Activated CD8-positive, alpha-beta T cell treated with anti-CD3 and anti-CD28 coated beads, Interleukin-2, amount 10 ng/mL, durations not matched to agents 7 days and 5 days (primary cell): ENCODE measurements at regions of chr15 and their contacts with region 1.

Region 1: GRCh38 chr15:90482124-90483011 is 47.4 kb upstream of the CRTC3 start:
- DNase-seq: peak; percentile 59
- ATAC-seq: no peak
- H3K4me3 Mint-ChIP-seq: no peak overlapping the region
- H3K27ac Mint-ChIP-seq: peak overlapping the region; percentile 22
- H3K4me1 Mint-ChIP-seq: peaks cover 38% of the 10 kb centered on the region
- H3K27me3 Mint-ChIP-seq: no peaks in the 10 kb centered on the region

Region 2: DNA sequence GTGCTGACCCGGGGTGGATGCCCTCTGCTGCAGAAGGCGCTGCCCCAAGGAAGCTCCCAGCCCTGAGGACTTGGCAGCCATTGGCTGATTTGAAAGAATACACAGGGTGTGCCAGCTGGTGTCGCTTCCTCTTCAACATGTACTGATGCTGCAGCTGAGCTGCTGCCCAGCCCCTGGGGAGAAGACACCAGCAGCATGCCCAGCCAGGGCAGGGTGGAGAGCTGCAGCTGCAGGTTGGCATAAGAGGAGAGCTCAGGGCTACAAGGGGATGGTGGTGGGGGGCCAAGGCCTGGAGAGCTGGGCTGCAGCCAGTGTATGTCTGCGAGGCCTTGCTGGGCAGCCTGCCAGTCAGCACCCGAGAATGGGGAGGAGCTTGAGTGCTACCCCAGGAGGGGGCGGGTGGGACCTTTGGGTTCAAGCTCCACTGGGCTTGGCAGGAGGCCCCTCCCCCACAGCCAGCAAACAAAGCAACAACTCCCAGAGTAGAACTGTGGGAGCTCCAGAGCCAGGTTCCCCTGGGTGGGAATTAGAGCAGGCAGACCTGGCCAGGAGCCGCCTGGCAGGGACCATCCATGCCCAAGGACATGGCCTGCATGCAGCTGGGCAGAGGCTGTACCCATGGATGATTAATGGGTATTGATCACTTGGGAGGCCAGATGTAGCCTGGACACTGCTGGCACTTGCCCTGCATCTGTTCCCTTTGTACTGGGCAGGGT is 290.4 kb before region 1 on chr15:
- CTCF ChIA-PET with region 1: no interaction called
- POLR2A ChIA-PET with region 1: no interaction called
- DNase-seq: peak; percentile 31
- ATAC-seq: peak; percentile 65
- H3K4me3 Mint-ChIP-seq: peak overlapping the region; percentile 60
- H3K27ac Mint-ChIP-seq: peak overlapping the region; percentile 78
- H3K4me1 Mint-ChIP-seq: peaks cover 34% of the 10 kb centered on the region
- H3K27me3 Mint-ChIP-seq: peaks cover 2% of the 10 kb centered on the region

Region 3: GRCh38 chr15:90291679-90292356 is 190.6 kb before region 1 on chr15:
- CTCF ChIA-PET with region 1: interaction called, 16 read pairs
- POLR2A ChIA-PET with region 1: no interaction called
- DNase-seq: peak; percentile 38
- ATAC-seq: no peak
- H3K4me3 Mint-ChIP-seq: no peak overlapping the region
- H3K27ac Mint-ChIP-seq: no peak overlapping the region
- H3K4me1 Mint-ChIP-seq: peaks cover 16% of the 10 kb centered on the region
- H3K27me3 Mint-ChIP-seq: peaks cover 6% of the 10 kb centered on the region

Region 4: GRCh38 chr15:90306560-90306959 is 175.8 kb before region 1 on chr15:
- CTCF ChIA-PET with region 1: interaction called, 27 read pairs
- POLR2A ChIA-PET with region 1: no interaction called
- DNase-seq: peak; percentile 60
- ATAC-seq: peak; percentile 84
- H3K4me3 Mint-ChIP-seq: peak overlapping the region; percentile 42
- H3K27ac Mint-ChIP-seq: peak overlapping the region; percentile 88
- H3K4me1 Mint-ChIP-seq: peaks cover 32% of the 10 kb centered on the region
- H3K27me3 Mint-ChIP-seq: peaks cover 4% of the 10 kb centered on the region

Region 5: DNA sequence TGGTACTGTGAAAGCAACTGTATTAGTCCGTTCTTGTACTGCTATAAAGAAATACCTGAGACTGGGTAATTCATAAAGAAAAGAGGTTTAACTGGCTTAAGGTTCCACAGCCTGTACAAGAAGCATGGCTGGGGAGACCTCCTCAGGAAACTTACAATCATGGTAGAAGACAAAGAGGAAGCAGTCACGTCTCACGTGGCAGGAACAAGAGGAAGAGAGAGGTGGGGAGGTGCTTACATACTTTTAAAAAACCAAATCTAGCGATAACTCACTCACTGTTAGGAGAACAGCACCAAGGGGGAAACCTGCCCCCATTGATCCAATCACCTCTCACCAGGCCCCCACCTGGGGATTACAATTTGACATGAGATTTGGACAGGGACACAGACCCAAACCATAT is 45.4 kb before region 1 on chr15:
- CTCF ChIA-PET with region 1: interaction called, 19 read pairs
- POLR2A ChIA-PET with region 1: no interaction called
- DNase-seq: no peak
- ATAC-seq: peak; percentile 30
- H3K4me3 Mint-ChIP-seq: no peak overlapping the region
- H3K27ac Mint-ChIP-seq: no peak overlapping the region
- H3K4me1 Mint-ChIP-seq: peaks cover 13% of the 10 kb centered on the region
- H3K27me3 Mint-ChIP-seq: no peaks in the 10 kb centered on the region

Region 6: DNA sequence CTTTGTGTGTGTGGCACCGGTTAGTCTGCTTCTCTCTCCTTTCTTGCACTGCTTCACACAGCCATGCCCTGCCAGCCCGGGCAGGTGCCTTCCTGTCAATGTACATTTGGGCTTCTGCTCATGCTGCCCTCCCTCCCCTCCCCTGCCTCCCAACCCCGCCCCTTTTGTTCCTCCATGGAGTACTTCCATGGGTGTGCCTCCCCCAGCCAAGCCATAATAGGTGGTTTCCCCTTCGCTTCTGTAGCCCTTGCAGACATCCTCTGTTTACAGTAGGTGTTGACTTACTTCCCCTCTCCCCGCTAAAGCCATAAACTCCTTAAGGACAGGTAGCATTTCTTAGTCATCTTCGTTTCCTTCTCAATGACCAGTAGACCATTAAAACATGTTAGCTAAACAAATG is 15.5 kb after region 1 on chr15:
- CTCF ChIA-PET with region 1: interaction called, 13 read pairs
- POLR2A ChIA-PET with region 1: no interaction called
- DNase-seq: no peak
- ATAC-seq: no peak
- H3K4me3 Mint-ChIP-seq: no peak overlapping the region
- H3K27ac Mint-ChIP-seq: no peak overlapping the region
- H3K4me1 Mint-ChIP-seq: peaks cover 12% of the 10 kb centered on the region
- H3K27me3 Mint-ChIP-seq: no peaks in the 10 kb centered on the region